Activated CD4-positive, alpha-beta T cell treated with anti-CD3 and anti-CD28 coated beads, Interleukin-2, amount 10 ng/mL, durations not matched to agents 24 days and 14 days (primary cell): ENCODE measurements at regions of chr12 and their contacts with region 1.

Region 1: GRCh38 chr12:1616233-1617066 is 12.6 kb upstream of the WNT5B start:
- DNase-seq: no peak
- H3K4me3 Mint-ChIP-seq: no peak overlapping the region
- H3K27ac Mint-ChIP-seq: no peak overlapping the region
- H3K4me1 Mint-ChIP-seq: peaks cover 27% of the 10 kb centered on the region
- H3K27me3 Mint-ChIP-seq: peaks cover 22% of the 10 kb centered on the region

Region 2: DNA sequence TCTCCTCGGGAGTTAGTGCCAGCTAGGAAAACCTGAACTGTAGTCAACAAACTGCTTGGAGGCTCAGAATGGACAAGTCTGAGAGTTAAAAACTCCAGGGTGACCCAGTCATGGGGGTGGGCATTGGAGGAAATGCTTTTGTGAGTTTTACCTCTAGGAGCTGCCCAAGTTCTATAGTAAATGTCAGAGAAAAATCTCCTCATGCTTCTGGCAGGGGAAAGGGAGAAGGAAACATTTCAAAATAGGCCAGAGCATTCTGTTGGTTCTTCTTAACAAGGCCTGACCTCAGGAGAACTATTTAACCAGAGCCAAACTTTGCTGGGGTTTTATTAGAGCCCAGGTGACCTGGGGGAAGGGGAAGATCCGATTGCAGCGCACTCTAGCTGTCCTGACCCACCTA is 965.5 kb before region 1 on chr12:
- intact Hi-C with region 1: no loop called
- DNase-seq: no peak
- H3K4me3 Mint-ChIP-seq: no peak overlapping the region
- H3K27ac Mint-ChIP-seq: no peak overlapping the region
- H3K4me1 Mint-ChIP-seq: peaks cover 13% of the 10 kb centered on the region
- H3K27me3 Mint-ChIP-seq: peaks cover 2% of the 10 kb centered on the region

Region 3: GRCh38 chr12:1517007-1517406 is 99.4 kb before region 1 on chr12:
- intact Hi-C with region 1: no loop called
- DNase-seq: no peak
- H3K4me3 Mint-ChIP-seq: no peak overlapping the region
- H3K27ac Mint-ChIP-seq: no peak overlapping the region
- H3K4me1 Mint-ChIP-seq: peaks cover 5% of the 10 kb centered on the region
- H3K27me3 Mint-ChIP-seq: peaks cover 45% of the 10 kb centered on the region

Region 4: GRCh38 chr12:1605129-1606020 is 11.1 kb before region 1 on chr12:
- intact Hi-C with region 1: loop called (anchors 1 kb)
- DNase-seq: peak; percentile 90
- H3K4me3 Mint-ChIP-seq: peak overlapping the region; percentile 86
- H3K27ac Mint-ChIP-seq: peak overlapping the region; percentile 64
- H3K4me1 Mint-ChIP-seq: peaks cover 41% of the 10 kb centered on the region
- H3K27me3 Mint-ChIP-seq: peaks cover 10% of the 10 kb centered on the region

Region 5: DNA sequence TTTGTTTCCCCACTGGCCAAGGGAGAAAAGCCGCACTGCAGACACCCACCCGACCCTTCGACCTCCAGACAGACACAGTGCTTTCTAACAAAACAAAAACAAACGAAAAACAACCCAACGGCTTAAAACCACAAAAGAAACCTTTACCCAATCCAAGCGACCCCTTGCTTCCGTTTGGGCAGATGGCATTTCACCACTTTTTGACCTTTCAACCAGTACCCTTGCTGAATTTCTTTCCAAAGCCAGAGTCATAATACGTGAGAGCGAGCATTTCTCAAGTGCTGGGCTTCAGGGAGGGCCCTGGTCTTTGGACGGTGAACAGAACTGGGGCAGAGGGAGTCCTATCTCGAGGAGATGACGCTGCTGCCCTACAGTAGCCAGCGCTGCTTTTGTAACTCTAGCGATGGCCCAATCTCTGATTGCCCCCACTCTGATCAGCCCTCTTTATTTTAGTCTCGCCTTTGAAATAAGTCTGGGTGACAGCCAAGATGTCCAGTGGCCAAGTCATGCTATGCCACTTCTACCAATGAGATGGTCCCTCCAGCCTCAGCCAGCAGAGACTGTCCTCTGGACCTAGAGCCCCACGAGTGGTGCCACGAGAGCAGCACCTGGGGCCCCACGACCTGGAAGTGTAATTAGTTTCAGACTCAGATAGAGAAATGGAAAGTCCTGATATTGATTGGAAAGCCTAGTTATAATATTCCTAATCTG is 52.5 kb after region 1 on chr12:
- intact Hi-C with region 1: no loop called
- DNase-seq: no peak
- H3K4me3 Mint-ChIP-seq: no peak overlapping the region
- H3K27ac Mint-ChIP-seq: no peak overlapping the region
- H3K4me1 Mint-ChIP-seq: peaks cover 28% of the 10 kb centered on the region
- H3K27me3 Mint-ChIP-seq: no peaks in the 10 kb centered on the region

Region 6: DNA sequence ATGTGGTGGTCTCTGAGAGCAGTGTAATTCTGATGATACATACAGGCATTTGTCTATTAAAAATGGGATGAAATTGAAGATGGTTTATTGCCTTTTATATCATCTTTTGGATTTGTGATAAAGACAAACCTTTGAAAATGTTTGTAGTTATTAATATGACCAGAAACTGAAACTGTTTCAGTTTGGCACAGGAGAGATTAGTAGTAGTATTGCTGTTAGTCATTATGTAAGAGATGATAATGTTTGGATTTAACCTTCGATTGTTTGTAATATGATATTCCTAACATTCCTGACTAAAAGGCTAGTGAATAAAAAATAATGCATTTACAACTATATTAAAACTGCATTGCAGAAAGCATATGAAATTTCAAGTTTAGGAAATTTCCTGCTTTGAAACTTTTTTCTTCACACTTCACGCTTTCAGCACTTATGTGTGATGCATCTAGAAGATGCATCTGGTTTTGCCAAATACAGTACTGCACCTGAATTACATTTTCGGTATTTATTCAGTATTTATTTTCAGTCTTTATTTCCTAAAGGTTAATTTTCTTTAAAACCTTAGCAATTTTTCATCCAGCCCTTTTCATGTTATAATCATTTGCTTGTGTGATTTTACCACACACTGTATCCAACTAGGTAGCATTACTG is 99.9 kb after region 1 on chr12:
- intact Hi-C with region 1: no loop called
- DNase-seq: no peak
- H3K4me3 Mint-ChIP-seq: no peak overlapping the region
- H3K27ac Mint-ChIP-seq: no peak overlapping the region
- H3K4me1 Mint-ChIP-seq: peaks cover 10% of the 10 kb centered on the region
- H3K27me3 Mint-ChIP-seq: no peaks in the 10 kb centered on the region